Activated naive CD8-positive, alpha-beta T cell treated with anti-CD3 and anti-CD28 coated beads, Interleukin-2, amount 10 ng/mL, durations not matched to agents 7 days and 5 days (primary cell): ENCODE measurements at regions of chr16 and their contacts with region 1.

Region 1: GRCh38 chr16:30370444-30371247 is at the start of gene TBC1D10B:
- DNase-seq: peak; percentile 96
- ATAC-seq: peak; percentile 83
- H3K4me3 Mint-ChIP-seq: peak within 1 kb of the TSS; percentile 96
- H3K27ac Mint-ChIP-seq: peak within 1 kb of the TSS; percentile 99
- H3K4me1 Mint-ChIP-seq: peaks cover 40% of the 10 kb centered on the region
- H3K27me3 Mint-ChIP-seq: no peaks in the 10 kb centered on the region
- total RNA-seq, gene TBC1D10B: 63.6 to 69.8 TPM

Region 2: GRCh38 chr16:30395155-30395991 is 24.7 kb after region 1 on chr16 and contains the start of gene ZNF48:
- POLR2A ChIA-PET with region 1: interaction called, 11 read pairs
- DNase-seq: peak; percentile 79
- ATAC-seq: peak; percentile 75
- H3K4me3 Mint-ChIP-seq: peak within 1 kb of the TSS; percentile 94
- H3K27ac Mint-ChIP-seq: peak within 1 kb of the TSS; percentile 82
- H3K4me1 Mint-ChIP-seq: peaks cover 34% of the 10 kb centered on the region
- H3K27me3 Mint-ChIP-seq: no peaks in the 10 kb centered on the region
- total RNA-seq, gene ZNF48: 14.4 to 15.5 TPM

Region 3: DNA sequence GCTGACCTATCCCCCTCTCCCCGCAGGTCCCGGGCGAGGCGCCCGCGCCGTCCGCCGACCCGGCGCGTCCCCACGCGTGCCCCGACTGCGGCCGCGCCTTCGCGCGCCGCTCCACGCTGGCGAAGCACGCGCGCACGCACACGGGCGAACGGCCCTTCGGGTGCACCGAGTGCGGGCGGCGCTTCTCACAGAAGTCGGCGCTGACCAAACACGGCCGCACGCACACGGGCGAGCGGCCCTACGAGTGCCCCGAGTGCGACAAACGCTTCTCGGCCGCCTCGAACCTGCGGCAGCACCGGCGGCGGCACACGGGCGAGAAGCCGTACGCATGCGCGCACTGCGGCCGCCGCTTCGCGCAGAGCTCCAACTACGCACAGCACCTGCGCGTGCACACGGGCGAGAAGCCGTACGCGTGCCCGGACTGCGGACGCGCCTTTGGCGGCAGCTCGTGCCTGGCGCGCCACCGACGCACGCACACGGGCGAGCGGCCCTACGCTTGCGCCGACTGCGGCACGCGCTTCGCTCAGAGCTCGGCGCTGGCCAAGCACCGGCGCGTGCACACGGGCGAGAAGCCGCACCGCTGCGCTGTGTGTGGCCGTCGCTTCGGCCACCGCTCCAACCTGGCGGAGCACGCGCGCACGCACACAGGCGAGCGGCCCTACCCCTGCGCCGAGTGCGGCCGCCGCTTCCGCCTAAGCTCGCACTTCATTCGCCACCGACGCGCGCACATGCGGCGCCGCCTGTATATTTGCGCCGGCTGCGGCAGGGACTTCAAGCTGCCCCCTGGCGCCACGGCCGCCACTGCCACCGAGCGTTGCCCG is 47.1 kb after region 1 on chr16:
- POLR2A ChIA-PET with region 1: interaction called, 13 read pairs
- DNase-seq: peak; percentile 91
- ATAC-seq: peak; percentile 90
- H3K4me3 Mint-ChIP-seq: peak overlapping the region; percentile 42
- H3K27ac Mint-ChIP-seq: no peak overlapping the region
- H3K4me1 Mint-ChIP-seq: peaks cover 21% of the 10 kb centered on the region
- H3K27me3 Mint-ChIP-seq: no peaks in the 10 kb centered on the region